Gastrocnemius medialis (tissue), 4 donors: ENCODE measurements at regions of chr1 and their contacts with region 1.

Region 1: DNA sequence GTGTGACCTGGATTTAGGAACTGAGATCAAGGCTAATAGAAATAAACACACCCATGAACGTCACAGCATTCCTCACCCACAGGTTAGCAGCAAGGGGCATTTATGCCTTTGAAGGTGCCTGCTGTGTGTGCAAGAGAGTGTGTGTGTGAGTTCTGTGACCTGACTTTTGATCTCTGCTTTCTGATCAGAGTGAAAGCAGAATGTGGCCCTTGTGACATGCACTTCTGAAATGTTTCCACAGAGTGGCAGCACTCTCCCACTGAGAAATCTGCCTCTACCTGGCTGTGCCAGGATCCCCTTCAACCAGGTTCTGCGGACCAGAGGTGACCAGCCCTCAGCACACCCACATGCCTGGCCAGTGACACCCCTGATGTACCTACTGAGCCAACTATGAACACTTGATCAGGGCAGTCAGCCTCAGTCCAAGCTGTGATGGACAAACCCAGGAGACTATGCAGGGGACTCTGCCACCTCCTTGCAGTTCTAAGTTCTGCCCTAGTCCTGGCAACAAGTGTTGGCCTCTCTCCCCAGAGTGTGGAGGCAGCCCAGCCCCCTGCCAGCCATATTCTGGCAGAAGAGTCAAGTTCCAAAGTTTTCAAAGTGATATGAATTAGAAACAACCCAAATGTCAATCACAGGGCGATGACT is 41.0 kb downstream of the RXRG start:
- DNase-seq: peak in 1 of 2 donors; percentile 28
- ATAC-seq: peak; percentile 46 to 51
- H3K4me3 ChIP-seq: no peak overlapping the region
- H3K27ac ChIP-seq: no peak overlapping the region
- H3K4me1 ChIP-seq: peaks cover 0 to 13% of the 10 kb centered on the region in 2 donors
- H3K27me3 ChIP-seq: no peaks in the 10 kb centered on the region
- CTCF ChIP-seq: peak; percentile 63 to 80 (median 76)
- POLR2A ChIP-seq: no peak

Region 2: DNA sequence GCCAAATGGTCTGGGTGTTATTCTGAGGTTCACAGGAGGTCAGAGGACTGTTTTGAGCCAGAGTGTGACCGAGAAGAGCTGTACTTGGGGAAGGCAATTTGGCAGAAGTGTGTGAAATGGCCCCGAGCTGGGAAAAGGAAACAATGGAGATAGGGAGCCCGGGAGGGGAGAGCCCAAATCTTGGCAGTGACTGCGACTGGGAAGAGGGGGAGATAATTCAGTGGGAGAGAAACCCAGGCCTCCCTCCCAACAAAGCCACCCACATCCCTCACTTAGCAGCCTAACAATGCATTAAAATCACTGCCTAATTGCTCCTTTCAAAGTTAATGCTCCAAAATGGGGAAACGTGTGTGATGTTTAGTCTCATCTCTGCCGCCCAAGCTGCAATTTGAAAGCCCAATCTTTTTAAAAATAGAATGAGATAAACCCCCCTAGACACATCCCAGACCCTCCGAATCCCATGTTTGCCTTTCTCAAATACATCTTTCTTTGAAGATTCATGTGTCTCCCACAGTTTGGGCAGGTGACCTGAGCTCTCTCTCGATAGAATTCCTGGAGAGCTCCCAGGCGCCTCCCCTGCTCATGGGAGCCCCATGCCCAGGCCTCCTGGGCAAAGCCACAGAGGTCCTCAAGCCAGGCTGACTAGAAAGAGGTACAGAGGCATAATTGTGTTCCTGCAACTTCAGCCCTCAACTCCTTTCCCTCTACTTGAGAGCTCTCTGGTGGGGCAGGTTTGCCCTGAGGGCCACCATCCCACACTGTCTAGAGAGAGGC is 157.1 kb after region 1 on chr1:
- in situ Hi-C with region 1: no loop called
- intact Hi-C with region 1: no loop called
- DNase-seq: no peak
- ATAC-seq: no peak
- H3K4me3 ChIP-seq: no peak overlapping the region
- H3K27ac ChIP-seq: no peak overlapping the region
- H3K4me1 ChIP-seq: no peaks in the 10 kb centered on the region
- H3K27me3 ChIP-seq: no peaks in the 10 kb centered on the region
- CTCF ChIP-seq: no peak
- POLR2A ChIP-seq: no peak

Region 3: DNA sequence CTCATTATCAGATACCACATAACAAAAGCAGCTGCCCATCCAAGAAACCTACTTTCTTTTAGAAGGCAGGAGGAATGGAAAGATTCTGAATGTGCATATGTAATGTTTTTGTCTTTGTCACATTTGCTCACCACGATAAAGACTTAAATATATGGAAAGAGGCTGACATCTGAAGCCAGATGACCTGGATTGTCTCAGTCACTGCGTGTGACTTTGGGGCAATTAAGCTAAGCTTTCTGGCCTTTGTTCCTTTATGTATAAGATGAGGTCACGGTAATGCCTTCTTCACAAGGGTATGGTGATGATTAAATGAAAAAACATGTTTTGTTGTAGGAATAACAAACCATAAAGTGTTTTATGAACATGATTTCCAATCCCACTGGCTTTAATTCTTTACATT is 182.5 kb after region 1 on chr1:
- in situ Hi-C with region 1: loop called in 3 of 4 experiments (anchors 5 kb)
- intact Hi-C with region 1: no loop called
- DNase-seq: no peak
- ATAC-seq: no peak
- H3K4me3 ChIP-seq: no peak overlapping the region
- H3K27ac ChIP-seq: no peak overlapping the region
- H3K4me1 ChIP-seq: no peaks in the 10 kb centered on the region
- H3K27me3 ChIP-seq: no peaks in the 10 kb centered on the region
- CTCF ChIP-seq: no peak
- POLR2A ChIP-seq: no peak

Region 4: GRCh38 chr1:165738794-165739193 is 334.8 kb after region 1 on chr1:
- in situ Hi-C with region 1: no loop called
- intact Hi-C with region 1: loop called (anchors 10 kb)
- DNase-seq: no peak
- ATAC-seq: no peak
- H3K4me3 ChIP-seq: no peak overlapping the region
- H3K27ac ChIP-seq: peak overlapping the region in 2 of 4 donors; percentile 55 to 73
- H3K4me1 ChIP-seq: peaks cover 20 to 21% of the 10 kb centered on the region in 2 donors
- H3K27me3 ChIP-seq: no peaks in the 10 kb centered on the region
- CTCF ChIP-seq: no peak
- POLR2A ChIP-seq: no peak